A549 (cell line): ENCODE measurements at regions of chr2 and their contacts with region 1.

Region 1: DNA sequence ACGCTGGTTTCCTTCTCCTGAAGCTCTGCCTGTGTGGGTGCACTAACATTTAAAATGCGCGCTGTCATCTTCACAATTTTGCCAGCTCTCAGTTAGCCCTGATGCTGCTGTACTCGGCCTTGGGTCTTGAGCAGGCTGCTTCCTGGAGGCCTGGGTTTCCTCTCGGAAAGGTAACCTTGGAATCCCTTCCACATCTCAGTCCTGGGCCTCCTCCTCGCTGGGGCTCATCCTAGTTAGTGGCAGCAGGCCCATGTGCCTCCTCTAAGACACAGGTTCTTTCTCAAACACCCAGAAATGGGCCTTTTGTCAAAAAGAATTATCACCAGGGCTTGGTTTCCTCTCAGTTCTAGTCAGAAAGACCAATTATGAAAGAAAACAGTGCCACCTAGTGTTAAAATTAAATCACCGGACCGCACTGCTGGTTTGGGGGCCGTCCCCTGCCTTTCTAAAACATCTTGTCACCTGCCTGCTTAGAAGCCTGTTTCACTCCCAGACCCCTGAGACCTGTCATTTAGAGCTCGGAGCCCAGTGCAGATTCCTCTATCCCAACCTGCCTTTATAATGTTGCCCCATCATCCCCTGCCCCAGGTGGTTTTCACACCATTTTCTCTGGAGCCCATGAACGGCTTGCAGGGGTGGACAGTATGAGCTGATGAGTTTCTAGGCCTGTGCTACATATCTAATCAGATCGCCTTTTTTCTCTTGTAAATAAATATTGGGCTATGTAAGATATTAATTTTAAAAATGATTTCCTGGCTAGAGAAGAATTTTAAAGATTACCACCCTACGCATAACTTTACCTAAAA is 42.4 kb downstream of the HK2 start:
- DNase-seq: peak; percentile 57 to 65
- ATAC-seq: peak; percentile 82 to 94
- H3K4me3 ChIP-seq: no peak overlapping the region
- H3K27ac ChIP-seq: 0 out of 6 replicates have a peak overlapping the region, but pooled peaks of 1 of the 2 experiments have one; percentile 21
- H3K4me1 ChIP-seq: no peaks in the 10 kb centered on the region
- CTCF ChIP-seq: peak; percentile 89
- EP300 ChIP-seq: no peak
- POLR2A ChIP-seq: no peak
- RAD21 ChIP-seq: peak; percentile 89 to 94

Region 2: GRCh38 chr2:74690571-74690970 is 185.7 kb before region 1 on chr2:
- CTCF ChIA-PET with region 1: interaction called, 132 read pairs
- POLR2A ChIA-PET with region 1: no interaction called
- DNase-seq: peak; percentile 70 to 73
- ATAC-seq: peak; percentile 85 to 94
- H3K4me3 ChIP-seq: no peak overlapping the region
- H3K27ac ChIP-seq: no peak overlapping the region
- H3K4me1 ChIP-seq: no peaks in the 10 kb centered on the region; the same call in 2 of the 3 replicates
- CTCF ChIP-seq: peak; percentile 97
- EP300 ChIP-seq: no peak
- POLR2A ChIP-seq: no peak
- RAD21 ChIP-seq: peak; percentile 96 to 99

Region 3: GRCh38 chr2:74715078-74715791 is 161.0 kb before region 1 on chr2:
- CTCF ChIA-PET with region 1: interaction called, 238 read pairs
- POLR2A ChIA-PET with region 1: no interaction called
- DNase-seq: peak; percentile 81 to 82
- ATAC-seq: peak; percentile 90 to 97
- H3K4me3 ChIP-seq: peak overlapping the region; percentile 47
- H3K27ac ChIP-seq: peak overlapping the region; percentile 13 to 83; a peak in 4 of 6 replicates
- H3K4me1 ChIP-seq: no peaks in the 10 kb centered on the region
- CTCF ChIP-seq: peak; percentile 98
- EP300 ChIP-seq: no peak
- POLR2A ChIP-seq: no peak
- RAD21 ChIP-seq: peak; percentile 89 to 90

Region 4: GRCh38 chr2:74819702-74820101 is 56.6 kb before region 1 on chr2:
- CTCF ChIA-PET with region 1: interaction called, 13 read pairs
- POLR2A ChIA-PET with region 1: no interaction called
- DNase-seq: no peak
- ATAC-seq: no peak
- H3K4me3 ChIP-seq: no peak overlapping the region
- H3K27ac ChIP-seq: no peak overlapping the region
- H3K4me1 ChIP-seq: no peaks in the 10 kb centered on the region
- CTCF ChIP-seq: no peak
- EP300 ChIP-seq: no peak
- POLR2A ChIP-seq: no peak
- RAD21 ChIP-seq: no peak

Region 5: GRCh38 chr2:74856004-74856578 is 20.2 kb before region 1 on chr2:
- CTCF ChIA-PET with region 1: interaction called, 57 read pairs
- POLR2A ChIA-PET with region 1: interaction called, 4 read pairs
- DNase-seq: peak in 1 of 2 experiments; percentile 37
- ATAC-seq: peak; percentile 18 to 68; a peak in 3 of 6 replicates
- H3K4me3 ChIP-seq: no peak overlapping the region
- H3K27ac ChIP-seq: peak overlapping the region in 1 of 2 experiments; percentile 21; a peak in 1 of 6 replicates
- H3K4me1 ChIP-seq: peaks cover 10% of the 10 kb centered on the region
- CTCF ChIP-seq: no peak
- EP300 ChIP-seq: no peak
- POLR2A ChIP-seq: no peak
- RAD21 ChIP-seq: no peak

Region 6: DNA sequence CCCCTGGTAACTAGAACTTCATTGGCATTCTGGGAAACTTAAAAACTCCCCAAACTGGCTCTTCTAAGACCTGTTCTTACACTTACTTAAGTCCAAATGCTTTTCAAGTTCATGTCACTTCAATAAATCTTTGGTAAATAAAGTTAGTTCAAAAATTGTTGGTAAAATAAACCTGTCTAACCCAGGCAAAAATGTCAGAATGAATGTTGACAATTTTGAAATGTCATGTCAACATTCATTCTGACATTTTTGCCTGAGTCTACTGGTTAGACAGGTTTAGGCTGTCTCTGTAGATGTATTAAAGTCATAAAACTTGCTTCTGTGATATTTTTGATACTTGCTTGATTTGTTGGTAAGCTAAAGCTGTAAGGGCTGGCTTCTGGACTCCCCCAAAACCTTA is 21.6 kb after region 1 on chr2:
- CTCF ChIA-PET with region 1: interaction called, 12 read pairs
- POLR2A ChIA-PET with region 1: no interaction called
- DNase-seq: no peak
- ATAC-seq: no peak
- H3K4me3 ChIP-seq: no peak overlapping the region
- H3K27ac ChIP-seq: no peak overlapping the region
- H3K4me1 ChIP-seq: peaks cover 7% of the 10 kb centered on the region; the same call in 2 of the 3 replicates
- CTCF ChIP-seq: no peak
- EP300 ChIP-seq: no peak
- POLR2A ChIP-seq: no peak
- RAD21 ChIP-seq: no peak

Region 7: GRCh38 chr2:74966887-74967286 is 90.6 kb after region 1 on chr2:
- CTCF ChIA-PET with region 1: no interaction called
- POLR2A ChIA-PET with region 1: no interaction called
- DNase-seq: no peak
- ATAC-seq: no peak
- H3K4me3 ChIP-seq: no peak overlapping the region
- H3K27ac ChIP-seq: no peak overlapping the region
- H3K4me1 ChIP-seq: no peaks in the 10 kb centered on the region
- CTCF ChIP-seq: no peak
- EP300 ChIP-seq: no peak
- POLR2A ChIP-seq: no peak
- RAD21 ChIP-seq: no peak